ENCODE measurements at regions of chr22 and their contacts with region 1.

Region 1: GRCh38 chr22:21001560-21002325 is at the start of gene THAP7:
- DNase-seq: peak; percentile 97
- H3K4me3 ChIP-seq: peak within 1 kb of the TSS; percentile 83
- H3K27ac ChIP-seq: peak within 1 kb of the TSS; percentile 96
- H3K4me1 ChIP-seq: peaks cover 36% of the 10 kb centered on the region
- CTCF ChIP-seq: no peak
- total RNA-seq, gene THAP7: 60.4 and 73.0 TPM in 2 replicates

Region 2: GRCh38 chr22:20858615-20859416 is 142.9 kb before region 1 on chr22 and contains the starts of genes PI4KA and SNAP29:
- CTCF ChIA-PET with region 1: no interaction called
- POLR2A ChIA-PET with region 1: no interaction called
- intact Hi-C with region 1: loop called (anchors 10 kb)
- DNase-seq: peak; percentile 98
- H3K4me3 ChIP-seq: peak within 1 kb of the TSS; percentile 94
- H3K27ac ChIP-seq: peak within 1 kb of the TSS; percentile 41
- H3K4me1 ChIP-seq: peaks cover 22% of the 10 kb centered on the region
- CTCF ChIP-seq: no peak
- total RNA-seq, gene PI4KA: 43.9 and 46.9 TPM in 2 replicates
- total RNA-seq, gene SNAP29: 9.7 and 12.7 TPM in 2 replicates

Region 3: GRCh38 chr22:20981787-20982562 is 19.8 kb before region 1 on chr22 and contains the start of gene LZTR1:
- CTCF ChIA-PET with region 1: no interaction called
- POLR2A ChIA-PET with region 1: interaction called, 8 read pairs
- intact Hi-C with region 1: loop called (anchors 1 kb)
- DNase-seq: peak; percentile 87
- H3K4me3 ChIP-seq: peak within 1 kb of the TSS; percentile 81
- H3K27ac ChIP-seq: peak within 1 kb of the TSS; percentile 48
- H3K4me1 ChIP-seq: peaks cover 19% of the 10 kb centered on the region
- CTCF ChIP-seq: peak; percentile 81
- total RNA-seq, gene LZTR1: 46.8 and 48.3 TPM in 2 replicates

Measured in OCI-LY7 (cell line).